Spleen (tissue), 13 donors: ENCODE measurements at regions of chr1 and their contacts with region 1.

Region 1: DNA sequence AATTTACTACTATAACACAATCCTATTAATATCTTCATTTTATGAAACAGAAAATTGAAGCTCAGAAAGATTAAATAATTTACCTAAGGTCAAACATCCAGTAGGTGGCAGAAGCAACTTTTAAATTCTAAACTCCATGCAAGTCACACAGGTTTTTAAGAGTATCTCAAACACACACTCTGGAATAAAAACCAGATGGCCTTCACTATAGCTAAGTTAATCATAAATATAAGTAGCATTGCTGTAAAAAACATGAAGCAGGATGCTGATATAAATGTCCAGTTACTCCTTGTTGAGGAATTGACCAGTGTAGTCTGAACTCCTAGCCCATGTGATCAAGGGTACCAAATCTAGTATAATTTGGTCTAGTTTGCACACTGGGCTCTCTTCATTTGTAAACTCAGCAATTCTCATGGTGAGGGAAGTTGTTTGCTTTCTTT is 9.4 kb upstream of the FMO3 start:
- DNase-seq: no peak
- H3K4me3 ChIP-seq: no peak overlapping the region
- H3K27ac ChIP-seq: no peak overlapping the region
- H3K4me1 ChIP-seq: no peaks in the 10 kb centered on the region
- H3K27me3 ChIP-seq: no peaks in the 10 kb centered on the region
- CTCF ChIP-seq: peak in 3 of 11 experiments; percentile 10 to 24 (median 21)
- POLR2A ChIP-seq: no peak

Region 2: DNA sequence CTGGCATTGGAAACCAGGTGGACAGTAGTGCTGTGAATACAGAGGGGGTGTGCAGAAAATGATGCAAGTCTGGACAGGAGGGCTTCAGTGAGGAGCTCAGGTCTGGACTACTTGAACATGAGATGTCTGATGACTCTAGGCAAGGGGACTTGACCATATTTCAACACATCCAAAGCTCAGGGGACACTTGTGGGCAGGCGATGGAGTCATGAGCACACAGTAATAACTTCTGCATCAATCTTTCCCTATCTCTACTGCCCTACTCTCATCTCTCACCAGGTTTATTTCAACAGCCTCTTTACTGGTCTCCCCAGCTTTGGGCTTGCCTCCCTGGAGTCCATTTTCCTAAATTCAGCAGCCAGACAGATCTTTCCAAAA is 125.6 kb after region 1 on chr1:
- intact Hi-C with region 1: loop called (anchors 10 kb)
- DNase-seq: no peak
- H3K4me3 ChIP-seq: no peak overlapping the region
- H3K27ac ChIP-seq: no peak overlapping the region
- H3K4me1 ChIP-seq: no peaks in the 10 kb centered on the region
- H3K27me3 ChIP-seq: no peaks in the 10 kb centered on the region
- CTCF ChIP-seq: no peak
- POLR2A ChIP-seq: no peak